Activated CD4-positive, alpha-beta memory T cell treated with anti-CD3 and anti-CD28 coated beads, Interleukin-2, amount 10 ng/mL, durations not matched to agents 7 days and 5 days (primary cell): ENCODE measurements at regions of chr20 and their contacts with region 1.

Region 1: DNA sequence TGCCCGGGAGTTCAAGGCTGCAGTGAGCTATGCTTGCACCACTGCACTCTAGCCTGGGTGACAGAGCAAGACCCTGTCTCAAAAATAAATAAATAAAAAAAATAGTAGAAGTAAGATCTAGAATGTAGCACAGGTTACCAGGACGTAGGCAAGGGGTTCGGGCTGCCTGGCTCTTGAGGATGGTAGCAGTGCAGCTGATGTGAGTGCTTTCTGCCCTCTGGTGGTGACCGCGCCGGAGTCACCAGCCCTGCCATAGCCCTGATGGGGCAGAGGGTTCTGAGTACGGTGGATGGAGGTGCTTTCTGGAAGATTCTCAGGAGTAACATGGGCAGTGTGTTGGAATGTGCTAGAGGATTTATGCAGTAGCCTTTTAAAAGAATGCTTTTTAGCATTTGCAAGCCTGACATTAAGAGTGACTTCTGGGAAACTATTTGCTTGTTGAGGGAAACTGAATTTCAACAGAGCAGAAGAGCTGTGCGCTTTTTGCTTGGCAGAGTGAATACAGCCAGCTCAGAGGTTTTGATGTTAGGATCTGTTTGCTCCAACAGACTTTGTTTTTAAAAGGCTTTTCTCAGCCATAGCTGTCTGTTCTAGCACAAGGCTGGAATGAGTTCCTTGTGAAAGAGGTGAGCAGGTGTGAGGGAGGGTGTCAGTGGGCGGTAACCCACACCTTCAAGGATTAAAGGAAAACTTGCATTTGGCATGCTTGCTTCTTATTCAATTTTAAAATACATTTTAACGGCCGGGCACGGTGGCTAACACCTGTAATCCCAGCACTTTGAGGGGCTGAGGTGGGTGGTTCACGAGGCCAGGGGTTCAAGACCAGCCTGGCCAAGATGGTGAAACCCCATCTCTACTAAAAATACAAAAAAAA is 65.9 kb downstream of the PTPN1 start:
- DNase-seq: peak; percentile 73
- H3K4me3 Mint-ChIP-seq: no peak overlapping the region
- H3K27ac Mint-ChIP-seq: no peak overlapping the region
- H3K4me1 Mint-ChIP-seq: peaks cover 22% of the 10 kb centered on the region
- H3K27me3 Mint-ChIP-seq: no peaks in the 10 kb centered on the region

Region 2: GRCh38 chr20:50478162-50479036 is 97.7 kb before region 1 on chr20:
- CTCF ChIA-PET with region 1: interaction called, 61 read pairs
- POLR2A ChIA-PET with region 1: interaction called, 7 read pairs
- DNase-seq: peak; percentile 83
- H3K4me3 Mint-ChIP-seq: no peak overlapping the region
- H3K27ac Mint-ChIP-seq: no peak overlapping the region
- H3K4me1 Mint-ChIP-seq: peaks cover 60% of the 10 kb centered on the region
- H3K27me3 Mint-ChIP-seq: no peaks in the 10 kb centered on the region

Region 3: DNA sequence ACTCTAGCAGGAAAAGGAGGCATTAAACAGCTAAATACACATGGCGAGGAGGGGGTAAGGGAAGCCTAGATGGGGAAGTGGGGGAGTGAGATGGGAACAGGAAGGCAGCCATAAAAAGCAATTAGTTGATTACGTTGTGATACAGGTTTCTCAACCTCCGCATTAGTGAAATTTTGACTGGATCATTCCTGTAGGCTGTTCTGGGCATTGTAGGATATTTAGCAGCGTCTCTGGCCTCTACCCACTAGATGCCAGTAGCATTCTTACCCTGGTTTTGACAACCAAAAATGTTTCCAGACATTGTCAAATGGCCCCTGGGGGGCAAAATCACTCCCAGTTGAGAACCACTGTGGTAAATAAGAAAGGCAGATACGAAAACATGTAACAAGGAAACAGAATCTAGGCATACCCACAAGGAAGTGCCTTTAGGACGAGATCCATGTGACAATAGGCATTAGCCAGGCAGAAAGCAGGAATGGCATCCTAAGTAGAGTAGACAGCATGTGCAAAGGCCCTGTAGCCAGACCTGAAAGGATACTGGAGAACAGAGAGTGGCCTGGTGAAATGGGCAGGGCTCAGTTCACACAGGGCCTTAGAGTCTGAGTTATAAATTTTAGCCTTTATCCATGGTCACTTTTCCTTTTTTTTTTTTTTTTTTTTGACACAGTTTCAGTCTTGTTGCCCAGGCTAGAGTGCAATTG is 91.7 kb before region 1 on chr20:
- CTCF ChIA-PET with region 1: interaction called, 61 read pairs
- POLR2A ChIA-PET with region 1: interaction called, 7 read pairs
- DNase-seq: no peak
- H3K4me3 Mint-ChIP-seq: peak overlapping the region; percentile 80
- H3K27ac Mint-ChIP-seq: peak overlapping the region; percentile 88
- H3K4me1 Mint-ChIP-seq: peaks cover 51% of the 10 kb centered on the region
- H3K27me3 Mint-ChIP-seq: no peaks in the 10 kb centered on the region

Region 4: GRCh38 chr20:50504231-50504823 is 71.8 kb before region 1 on chr20:
- CTCF ChIA-PET with region 1: interaction called, 28 read pairs
- POLR2A ChIA-PET with region 1: interaction called, 22 read pairs
- DNase-seq: no peak
- H3K4me3 Mint-ChIP-seq: no peak overlapping the region
- H3K27ac Mint-ChIP-seq: no peak overlapping the region
- H3K4me1 Mint-ChIP-seq: peaks cover 14% of the 10 kb centered on the region
- H3K27me3 Mint-ChIP-seq: no peaks in the 10 kb centered on the region

Region 5: GRCh38 chr20:50509935-50510705 is 66.0 kb before region 1 on chr20 and contains the start of gene PTPN1:
- CTCF ChIA-PET with region 1: interaction called, 28 read pairs
- POLR2A ChIA-PET with region 1: interaction called, 22 read pairs
- DNase-seq: peak; percentile 99
- H3K4me3 Mint-ChIP-seq: peak within 1 kb of the TSS; percentile 91
- H3K27ac Mint-ChIP-seq: peak within 1 kb of the TSS; percentile 81
- H3K4me1 Mint-ChIP-seq: peaks cover 42% of the 10 kb centered on the region
- H3K27me3 Mint-ChIP-seq: no peaks in the 10 kb centered on the region
- total RNA-seq, gene PTPN1: 79.6 to 80.5 TPM

Region 6: GRCh38 chr20:50516180-50516934 is 59.7 kb before region 1 on chr20:
- CTCF ChIA-PET with region 1: interaction called, 22 read pairs
- POLR2A ChIA-PET with region 1: interaction called, 22 read pairs
- DNase-seq: no peak
- H3K4me3 Mint-ChIP-seq: peak overlapping the region; percentile 65
- H3K27ac Mint-ChIP-seq: peak overlapping the region; percentile 93
- H3K4me1 Mint-ChIP-seq: peaks cover 88% of the 10 kb centered on the region
- H3K27me3 Mint-ChIP-seq: no peaks in the 10 kb centered on the region

Region 7: DNA sequence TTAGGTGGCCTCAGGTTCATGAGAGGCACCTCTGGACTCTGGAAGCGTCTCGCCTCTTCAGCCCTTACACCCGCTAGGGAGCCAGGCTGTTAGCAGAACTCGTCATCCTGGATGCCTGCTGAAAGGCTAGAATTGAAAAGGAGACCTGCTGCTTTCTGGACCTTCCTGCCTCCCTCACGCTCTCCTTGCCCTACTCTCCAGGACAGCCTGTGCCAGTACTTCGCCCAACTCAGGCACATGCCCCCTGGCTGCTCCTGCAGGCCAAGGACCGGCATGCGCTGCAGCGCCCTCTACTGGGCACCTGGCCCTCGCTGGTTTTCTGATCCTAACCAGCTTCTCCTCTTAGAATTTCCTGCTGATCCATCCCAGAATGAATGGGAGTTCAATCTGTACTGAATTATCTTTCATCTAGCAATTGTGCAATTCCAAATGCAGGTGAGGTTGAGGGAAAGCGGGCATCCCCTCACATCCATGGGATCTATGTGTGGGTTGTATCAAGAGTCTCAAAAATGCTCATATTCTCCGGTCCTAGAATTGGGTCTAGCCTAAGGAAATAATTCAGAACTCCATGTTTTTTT is 12.0 kb after region 1 on chr20:
- CTCF ChIA-PET with region 1: interaction called, 10 read pairs
- POLR2A ChIA-PET with region 1: no interaction called
- DNase-seq: peak; percentile 76
- H3K4me3 Mint-ChIP-seq: no peak overlapping the region
- H3K27ac Mint-ChIP-seq: peak overlapping the region; percentile 45
- H3K4me1 Mint-ChIP-seq: peaks cover 3% of the 10 kb centered on the region
- H3K27me3 Mint-ChIP-seq: no peaks in the 10 kb centered on the region

Region 8: GRCh38 chr20:50610221-50610620 is 34.1 kb after region 1 on chr20:
- CTCF ChIA-PET with region 1: no interaction called
- POLR2A ChIA-PET with region 1: no interaction called
- DNase-seq: no peak
- H3K4me3 Mint-ChIP-seq: no peak overlapping the region
- H3K27ac Mint-ChIP-seq: no peak overlapping the region
- H3K4me1 Mint-ChIP-seq: no peaks in the 10 kb centered on the region
- H3K27me3 Mint-ChIP-seq: no peaks in the 10 kb centered on the region